ENCODE measurements at regions of chr4 and their contacts with region 1.

Region 1: DNA sequence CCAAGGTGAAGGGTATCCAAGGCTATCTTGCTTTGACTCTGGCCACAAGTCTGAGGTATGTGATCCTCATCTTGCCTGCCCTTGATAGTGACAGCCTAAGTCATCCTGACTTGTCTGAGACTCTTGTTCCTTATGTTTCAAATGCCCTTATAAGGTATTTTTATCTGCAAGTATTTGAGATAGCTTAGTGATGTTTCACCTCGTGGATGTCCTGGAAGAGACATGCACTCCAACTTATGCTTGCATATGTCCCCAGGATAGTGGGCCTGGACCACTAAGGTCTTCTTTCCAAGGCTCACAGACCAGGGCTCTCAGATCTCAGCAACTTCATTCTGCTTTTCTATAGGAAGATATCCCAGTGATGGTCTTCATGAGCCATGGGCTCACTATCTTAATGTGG is 120.5 kb upstream of the WDR1 start:
- DNase-seq: no peak

Region 2: DNA sequence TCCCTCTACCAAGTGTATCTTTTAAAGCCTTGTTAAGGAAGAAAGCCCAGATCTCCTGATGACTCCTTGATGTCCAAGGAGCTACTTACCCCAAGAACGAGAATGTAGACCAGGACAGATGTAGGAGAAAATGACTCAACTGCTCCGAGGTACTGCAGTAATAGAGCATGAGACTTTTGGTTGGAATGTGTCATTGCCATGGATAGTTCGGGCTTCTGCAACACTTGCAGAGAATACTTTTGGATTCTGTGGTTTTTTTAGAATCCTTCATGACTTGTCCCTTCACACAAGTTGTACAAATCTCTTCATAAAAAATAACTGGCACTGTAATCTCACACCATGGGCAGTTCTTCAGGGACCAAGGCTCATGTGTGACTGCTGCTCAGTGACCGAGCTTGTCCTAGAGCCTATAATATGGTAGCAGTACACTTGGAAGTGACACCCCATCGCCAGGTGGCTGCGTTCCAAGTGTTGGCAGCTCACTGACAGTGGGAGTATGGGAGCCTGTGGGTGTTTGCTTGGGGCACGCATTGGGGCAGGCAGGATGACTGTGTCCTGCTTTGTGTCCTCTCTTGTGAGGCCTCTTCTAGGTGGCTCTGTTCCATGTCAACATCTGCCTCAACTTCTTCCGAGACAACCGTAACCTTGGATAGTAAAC is 32.6 kb before region 1 on chr4:
- intact Hi-C with region 1: loop called (anchors 1 kb)
- DNase-seq: peak in 3 of 10 donors; percentile 11 to 85 (median 73)

Measured in posterior cingulate gyrus (tissue), 11 donors.